Activated CD8-positive, alpha-beta T cell treated with anti-CD3 and anti-CD28 coated beads, Interleukin-2, amount 10 ng/mL, durations not matched to agents 7 days and 5 days (primary cell): ENCODE measurements at regions of chr16 and their contacts with region 1.

Region 1: GRCh38 chr16:89860747-89861304 is 12.6 kb upstream of the TCF25 start:
- DNase-seq: peak; percentile 82
- ATAC-seq: peak; percentile 81
- H3K4me3 Mint-ChIP-seq: no peak overlapping the region
- H3K27ac Mint-ChIP-seq: no peak overlapping the region
- H3K4me1 Mint-ChIP-seq: peaks cover 32% of the 10 kb centered on the region
- H3K27me3 Mint-ChIP-seq: no peaks in the 10 kb centered on the region

Region 2: DNA sequence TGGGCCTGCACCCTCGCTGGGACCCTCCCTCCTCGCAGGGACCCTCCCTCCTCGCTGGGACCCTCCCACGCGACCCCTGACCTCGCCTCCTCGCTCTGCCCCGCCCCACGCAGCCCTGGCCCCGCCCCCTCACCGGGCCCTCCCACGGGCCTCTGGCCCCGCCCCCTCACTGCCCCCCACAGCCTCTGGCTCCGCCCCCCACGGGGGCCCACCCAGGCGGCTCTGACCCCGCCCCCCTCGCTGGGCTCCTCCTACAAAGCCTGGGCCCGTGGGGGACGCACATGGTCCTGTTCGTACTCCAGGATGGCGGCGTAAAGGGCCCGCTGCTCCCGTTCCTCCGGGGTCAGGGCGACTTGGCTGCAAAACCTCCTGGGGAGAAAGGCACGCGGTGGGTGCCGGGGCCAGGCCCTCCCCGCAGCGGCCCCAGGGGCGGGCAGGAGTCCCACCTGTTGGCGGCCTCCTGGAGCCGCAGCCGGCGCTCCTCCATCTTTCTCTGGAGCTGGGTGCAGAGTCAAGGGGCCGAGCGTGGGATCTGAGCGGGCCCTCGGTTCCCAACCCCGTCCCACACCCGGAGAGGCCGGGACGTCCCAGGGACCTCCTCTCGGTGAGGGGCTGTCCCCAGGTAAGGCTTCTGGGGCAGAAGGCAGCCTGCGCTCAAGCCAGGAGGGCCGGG is 149.1 kb before region 1 on chr16:
- CTCF ChIA-PET with region 1: interaction called, 88 read pairs
- POLR2A ChIA-PET with region 1: interaction called, 4 read pairs
- DNase-seq: peak; percentile 80
- ATAC-seq: peak; percentile 90
- H3K4me3 Mint-ChIP-seq: peak overlapping the region; percentile 78
- H3K27ac Mint-ChIP-seq: peak overlapping the region; percentile 64
- H3K4me1 Mint-ChIP-seq: peaks cover 10% of the 10 kb centered on the region
- H3K27me3 Mint-ChIP-seq: no peaks in the 10 kb centered on the region

Region 3: GRCh38 chr16:89737341-89738071 is 123.3 kb before region 1 on chr16:
- CTCF ChIA-PET with region 1: interaction called, 12 read pairs
- POLR2A ChIA-PET with region 1: no interaction called
- DNase-seq: peak; percentile 70
- ATAC-seq: peak; percentile 63
- H3K4me3 Mint-ChIP-seq: peak overlapping the region; percentile 15
- H3K27ac Mint-ChIP-seq: peak overlapping the region; percentile 71
- H3K4me1 Mint-ChIP-seq: peaks cover 32% of the 10 kb centered on the region
- H3K27me3 Mint-ChIP-seq: no peaks in the 10 kb centered on the region

Region 4: GRCh38 chr16:89785523-89786155 is 75.2 kb before region 1 on chr16:
- CTCF ChIA-PET with region 1: interaction called, 10 read pairs
- POLR2A ChIA-PET with region 1: no interaction called
- DNase-seq: peak; percentile 70
- ATAC-seq: peak; percentile 83
- H3K4me3 Mint-ChIP-seq: peak overlapping the region; percentile 25
- H3K27ac Mint-ChIP-seq: peak overlapping the region; percentile 32
- H3K4me1 Mint-ChIP-seq: peaks cover 33% of the 10 kb centered on the region
- H3K27me3 Mint-ChIP-seq: no peaks in the 10 kb centered on the region

Region 5: DNA sequence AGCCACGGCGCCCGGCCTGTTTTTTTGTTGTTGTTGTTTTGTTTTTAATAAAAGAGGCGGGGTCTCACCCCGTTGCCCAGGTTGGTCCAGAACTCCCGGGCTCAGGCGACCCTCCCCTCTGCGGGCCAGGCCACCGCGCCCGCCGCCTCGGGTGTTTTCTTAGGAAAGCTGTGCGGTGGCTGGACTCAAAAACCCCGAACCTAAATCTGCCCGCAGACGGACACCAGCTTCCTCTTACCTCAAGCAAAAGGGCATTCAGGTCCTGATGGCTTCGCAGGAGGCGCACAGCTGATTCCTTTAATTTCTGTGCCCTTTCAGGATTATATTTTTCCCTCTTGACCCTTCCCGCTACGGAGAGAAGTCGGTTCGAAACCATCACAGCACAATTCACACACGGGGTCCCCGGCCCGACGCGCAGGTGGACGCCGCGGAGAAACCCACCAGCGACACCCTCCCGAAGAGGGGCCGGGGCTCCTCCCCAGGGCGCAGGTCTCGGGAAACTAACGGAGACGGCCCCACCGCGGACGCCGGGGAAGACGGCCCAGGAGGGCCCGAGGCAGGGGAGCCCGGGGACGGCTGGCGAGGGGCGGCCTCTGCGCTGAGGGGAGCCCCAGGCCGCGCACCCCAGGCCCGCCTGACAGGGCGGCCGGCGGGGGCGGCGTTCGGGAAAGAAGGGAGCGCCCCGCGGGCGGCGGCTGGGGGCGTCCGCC is 45.0 kb before region 1 on chr16:
- CTCF ChIA-PET with region 1: interaction called, 25 read pairs
- POLR2A ChIA-PET with region 1: interaction called, 3 read pairs
- DNase-seq: no peak
- ATAC-seq: peak; percentile 50
- H3K4me3 Mint-ChIP-seq: peak overlapping the region; percentile 90
- H3K27ac Mint-ChIP-seq: peak overlapping the region; percentile 83
- H3K4me1 Mint-ChIP-seq: peaks cover 30% of the 10 kb centered on the region
- H3K27me3 Mint-ChIP-seq: peaks cover 3% of the 10 kb centered on the region